ENCODE measurements at regions of chr19 and their contacts with region 1.

Region 1: GRCh38 chr19:58326914-58327726 is at the start of gene ZSCAN22:
- DNase-seq: peak; percentile 99
- ATAC-seq: peak; percentile 97 to 98
- total RNA-seq, gene ZSCAN22: 2.0 to 2.1 TPM

Region 2: DNA sequence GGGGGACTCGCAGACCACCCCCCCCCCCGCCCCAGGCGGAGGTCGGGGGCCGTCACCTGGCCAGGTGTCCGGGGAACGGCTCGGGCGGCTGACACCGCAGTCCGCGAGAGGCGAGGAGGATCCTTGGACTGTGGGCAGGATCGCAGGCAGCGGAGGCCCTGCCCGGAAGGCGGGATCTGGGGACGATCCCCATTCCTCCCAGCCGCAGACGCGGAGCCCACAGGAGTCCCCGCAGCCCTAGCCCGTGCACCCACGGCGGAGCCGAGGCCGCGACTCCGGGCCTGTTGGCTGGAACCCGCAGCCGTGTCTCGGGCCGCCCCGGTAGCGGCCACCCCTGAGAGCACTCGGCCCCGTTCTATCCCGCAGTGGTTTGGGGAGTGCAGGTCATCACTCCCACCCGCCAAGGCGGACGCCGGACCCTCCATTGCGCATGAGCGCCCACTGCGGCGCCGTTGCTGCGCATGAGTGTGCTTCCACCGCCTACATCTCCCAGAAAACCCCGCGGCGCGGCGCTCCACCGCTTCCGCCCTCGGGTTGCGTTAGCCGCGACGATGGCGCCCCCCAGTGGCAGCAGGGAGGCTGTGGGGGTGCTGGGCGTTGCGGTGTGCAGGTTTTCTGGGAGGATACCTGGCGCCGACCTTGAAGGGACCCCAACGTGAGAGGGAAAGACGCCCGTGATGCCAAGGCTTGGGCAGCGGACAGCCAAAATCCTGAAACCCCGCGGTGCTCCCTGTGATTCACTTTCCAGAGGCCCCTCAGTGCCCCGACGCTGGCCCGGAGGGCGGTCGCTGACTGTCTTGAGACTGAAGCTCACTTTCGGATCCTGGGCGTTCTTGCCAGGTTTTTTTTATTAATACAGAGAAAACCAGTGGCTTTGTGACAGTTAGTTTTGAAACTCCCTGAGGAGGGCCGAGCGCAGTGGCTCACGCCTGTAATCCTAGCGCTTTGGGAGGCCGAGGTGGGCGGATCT is 172.2 kb before region 1 on chr19:
- intact Hi-C with region 1: no loop called
- DNase-seq: peak; percentile 98
- ATAC-seq: peak; percentile 97 to 98

Region 3: GRCh38 chr19:58362272-58362994 is 35.3 kb after region 1 on chr19 and contains the start of gene ZNF497:
- intact Hi-C with region 1: loop called in 1 of 2 experiments (anchors 1 kb)
- DNase-seq: peak; percentile 99
- ATAC-seq: peak; percentile 96 to 97
- total RNA-seq, gene ZNF497: 0.37 to 0.41 TPM

Region 4: GRCh38 chr19:58416604-58417003 is 89.5 kb after region 1 on chr19:
- intact Hi-C with region 1: no loop called
- DNase-seq: no peak
- ATAC-seq: no peak